ENCODE measurements at regions of chr12 and their contacts with region 1.

Region 1: DNA sequence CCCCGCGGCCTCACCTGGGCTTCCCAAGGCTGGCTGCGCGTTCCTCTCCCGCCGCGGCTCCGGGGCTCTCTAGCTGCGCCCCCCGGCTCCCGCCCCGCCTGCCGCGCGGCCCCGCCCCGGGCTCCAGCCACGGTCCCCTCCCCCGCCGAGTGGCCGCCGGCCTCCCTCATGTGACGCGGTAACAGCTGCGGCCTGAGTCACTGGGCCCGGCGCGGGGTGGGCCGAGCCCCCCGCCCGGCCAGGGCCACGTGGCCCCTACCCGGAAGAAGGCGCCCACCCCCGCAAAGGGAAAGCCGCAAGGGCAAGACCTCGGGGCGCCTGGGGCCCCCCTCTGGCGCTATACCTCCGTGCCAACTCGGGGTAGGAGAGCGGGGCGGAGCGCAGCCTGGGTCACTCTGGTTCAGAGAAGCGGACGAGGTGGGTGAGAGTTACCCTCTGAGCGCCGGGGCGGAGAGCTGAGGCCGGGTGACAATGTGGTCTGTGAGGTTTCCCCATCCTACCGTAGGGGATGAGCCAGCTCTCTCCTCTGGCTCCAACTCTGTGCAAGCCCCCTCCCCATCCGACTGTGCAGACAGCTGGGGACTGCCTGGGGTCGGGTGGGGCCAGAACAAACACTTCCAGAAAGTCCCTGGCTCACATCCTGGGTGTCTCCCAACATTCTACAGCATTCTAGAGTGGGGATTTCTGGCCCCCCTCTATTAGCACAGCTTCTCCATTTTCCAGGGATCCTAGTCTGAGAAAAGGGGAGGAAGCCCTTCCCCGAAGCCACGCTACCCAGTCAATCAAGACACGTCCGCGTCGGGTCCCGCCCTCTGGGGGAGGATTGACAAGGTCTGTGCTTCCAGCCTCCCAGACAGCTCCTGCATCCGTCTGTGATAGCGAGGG is at the start of gene CD63:
- DNase-seq: peak; percentile 96
- total RNA-seq, gene CD63: 914 TPM

Region 2: GRCh38 chr12:55707841-55708694 is 21.1 kb before region 1 on chr12 and contains the start of gene ITGA7:
- intact Hi-C with region 1: loop called (anchors 1 kb)
- DNase-seq: peak; percentile 93
- total RNA-seq, gene ITGA7: 806 TPM